Caco-2 (cell line): ENCODE measurements at regions of chr16 and their contacts with region 1.

Region 1: GRCh38 chr16:78200623-78201096 is 101.2 kb downstream of the WWOX start:
- DNase-seq: peak; percentile 44 to 51
- H3K4me3 ChIP-seq: no peak overlapping the region
- H3K4me3 Mint-ChIP-seq: peak overlapping the region; percentile 55
- H3K27ac Mint-ChIP-seq: peak overlapping the region; percentile 97
- H3K4me1 ChIP-seq: peaks cover 40% of the 10 kb centered on the region
- H3K4me1 Mint-ChIP-seq: peaks cover 47% of the 10 kb centered on the region
- H3K27me3 ChIP-seq: no peaks in the 10 kb centered on the region
- H3K27me3 Mint-ChIP-seq: no peaks in the 10 kb centered on the region
- CTCF ChIP-seq: no peak

Region 2: DNA sequence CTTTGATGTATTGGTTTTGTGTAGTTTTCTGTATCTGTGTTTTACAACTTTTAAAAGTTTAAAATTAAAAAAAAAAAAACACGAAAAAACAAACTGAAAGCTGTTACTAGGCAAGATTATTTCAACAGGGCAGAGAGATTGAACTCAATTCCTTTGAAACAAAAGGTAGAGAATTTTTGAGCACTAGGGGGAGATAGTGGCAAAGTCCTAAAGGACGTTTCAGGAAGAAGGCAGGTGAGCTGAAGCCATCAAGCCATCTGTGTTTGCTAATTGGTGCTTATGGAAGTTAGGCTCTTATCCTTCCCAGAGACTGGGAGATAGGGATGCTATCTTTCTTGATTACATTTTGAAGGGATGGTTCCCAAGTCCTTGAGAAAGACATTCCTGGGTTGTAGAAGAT is 248.9 kb before region 1 on chr16:
- CTCF ChIA-PET with region 1: no interaction called
- POLR2A ChIA-PET with region 1: no interaction called
- intact Hi-C with region 1: no loop called
- DNase-seq: peak in 1 of 2 experiments; percentile 65
- H3K4me3 ChIP-seq: no peak overlapping the region
- H3K4me3 Mint-ChIP-seq: no peak overlapping the region
- H3K27ac Mint-ChIP-seq: no peak overlapping the region
- H3K4me1 ChIP-seq: no peaks in the 10 kb centered on the region
- H3K4me1 Mint-ChIP-seq: no peaks in the 10 kb centered on the region
- H3K27me3 ChIP-seq: no peaks in the 10 kb centered on the region
- H3K27me3 Mint-ChIP-seq: peaks cover 20% of the 10 kb centered on the region
- CTCF ChIP-seq: peak; percentile 47 to 74

Region 3: DNA sequence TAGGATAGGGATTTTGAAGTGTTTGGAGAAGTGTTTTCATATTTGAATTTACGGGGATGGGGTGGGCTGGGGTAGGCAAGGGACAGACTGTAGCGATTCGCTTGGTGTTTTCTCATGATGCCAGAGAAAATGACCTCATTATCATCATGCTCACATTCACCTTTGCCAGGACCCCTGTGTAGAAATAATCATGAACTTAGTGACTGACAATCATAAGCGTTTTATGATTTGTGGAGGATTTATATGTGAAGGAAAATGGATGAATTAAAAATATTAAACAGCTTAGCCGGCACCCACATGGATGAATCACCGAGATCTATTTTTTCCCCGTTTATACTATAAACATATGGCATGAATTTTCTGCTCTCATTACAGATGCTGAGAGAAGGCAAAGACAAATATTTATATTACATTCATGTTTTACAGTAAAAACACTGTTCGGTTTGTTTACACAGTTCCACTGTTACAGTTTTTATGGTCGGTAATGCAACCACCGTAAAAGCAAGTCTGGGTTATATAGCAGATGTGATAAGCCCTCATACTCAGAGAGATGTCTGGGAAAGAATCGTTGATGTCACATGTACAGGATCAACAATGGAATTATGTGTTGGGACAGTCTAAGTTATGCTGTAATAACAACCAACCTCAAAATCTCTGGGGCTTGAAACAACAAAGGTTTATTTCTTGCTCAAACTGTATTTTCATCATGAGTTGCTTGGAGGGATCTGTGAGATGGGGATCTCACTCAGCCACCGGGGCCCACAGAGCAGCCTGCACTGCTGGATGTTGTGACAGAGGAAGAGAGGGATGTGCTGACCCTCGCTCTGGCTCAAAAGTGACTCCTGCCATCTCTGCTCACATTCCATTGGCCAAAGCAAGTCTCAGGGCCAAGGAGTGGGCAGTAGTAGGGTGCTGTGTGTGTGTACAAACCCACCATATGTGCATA is 16.1 kb before region 1 on chr16:
- CTCF ChIA-PET with region 1: no interaction called
- POLR2A ChIA-PET with region 1: no interaction called
- intact Hi-C with region 1: loop called (anchors 1 kb)
- DNase-seq: peak in 1 of 2 experiments; percentile 15
- H3K4me3 ChIP-seq: no peak overlapping the region
- H3K4me3 Mint-ChIP-seq: no peak overlapping the region
- H3K27ac Mint-ChIP-seq: no peak overlapping the region
- H3K4me1 ChIP-seq: peaks cover 10% of the 10 kb centered on the region; the same call in 1 of the 2 replicates
- H3K4me1 Mint-ChIP-seq: peaks cover 12% of the 10 kb centered on the region
- H3K27me3 ChIP-seq: no peaks in the 10 kb centered on the region
- H3K27me3 Mint-ChIP-seq: no peaks in the 10 kb centered on the region
- CTCF ChIP-seq: no peak